ENCODE measurements at regions of chr3 and their contacts with region 1.

Region 1: DNA sequence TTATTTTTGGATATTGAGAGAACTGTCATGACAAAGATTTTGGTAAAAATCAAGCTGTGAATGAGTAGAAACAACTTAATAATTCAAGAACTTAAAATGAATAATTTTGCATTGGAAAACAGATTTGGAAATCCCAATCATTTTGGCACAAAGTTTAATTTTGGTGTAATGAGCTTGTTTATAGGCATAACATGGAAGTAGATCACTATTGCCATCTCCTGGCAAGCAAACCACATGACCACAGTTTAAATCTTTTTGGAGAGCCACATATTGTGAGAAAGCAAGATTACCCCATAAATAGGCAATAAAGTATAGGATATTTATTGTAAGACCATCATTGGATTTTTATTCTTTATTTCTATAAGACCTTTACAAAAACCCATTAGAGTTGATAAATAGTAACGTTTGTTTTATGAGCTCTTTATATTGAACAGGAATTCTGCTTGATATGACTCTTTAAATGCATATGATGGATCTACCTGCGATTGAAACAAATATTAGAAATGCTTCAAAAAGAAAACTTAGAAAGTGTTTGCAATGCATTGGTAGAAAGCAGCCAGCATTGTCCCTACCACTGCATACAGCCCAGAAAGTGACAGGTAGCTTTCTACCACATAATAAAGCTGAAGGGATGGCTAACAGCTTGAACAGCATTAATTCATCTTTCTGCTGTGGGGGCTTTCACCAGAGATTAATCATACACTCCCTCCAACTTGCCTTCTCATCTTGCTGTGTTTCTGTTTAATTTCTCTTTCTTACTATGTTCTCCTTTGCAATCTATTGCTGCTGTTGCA is 766.8 kb downstream of the TBL1XR1 start:
- DNase-seq: no peak
- H3K4me3 ChIP-seq: no peak overlapping the region
- H3K27ac ChIP-seq: no peak overlapping the region
- H3K4me1 ChIP-seq: peaks cover 0 to 5% (median 3%) of the 10 kb centered on the region in 4 experiments; a peak in 2 of 7 replicates
- H3K27me3 ChIP-seq: no peaks in the 10 kb centered on the region
- CTCF ChIP-seq: peak in 2 of 3 experiments; percentile 55 to 67; a peak in 2 of 4 replicates
- EP300 ChIP-seq: no peak
- POLR2A ChIP-seq: no peak
- RAD21 ChIP-seq: peak; percentile 92 to 94

Region 2: DNA sequence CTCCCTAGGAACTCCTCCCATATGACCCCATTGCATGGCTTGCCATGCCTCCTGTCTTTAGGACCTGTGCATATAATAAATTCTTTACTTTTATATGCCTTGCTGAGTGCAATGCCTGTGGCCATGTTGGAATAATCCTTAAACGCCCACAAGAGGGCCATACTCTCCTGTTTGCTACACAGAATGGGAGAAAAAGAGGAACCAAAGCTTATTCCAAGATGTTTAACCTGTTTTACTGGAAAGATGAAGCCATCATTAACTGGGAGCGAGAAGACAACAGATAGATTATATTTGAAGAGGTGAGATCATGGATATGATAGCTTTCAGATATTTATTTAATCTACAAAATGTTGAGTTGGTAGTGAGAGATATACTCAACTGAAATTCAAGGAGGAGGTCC is 473.4 kb before region 1 on chr3:
- CTCF ChIA-PET with region 1: interaction called, 10 read pairs
- POLR2A ChIA-PET with region 1: no interaction called
- DNase-seq: peak in 1 of 2 experiments; percentile 51
- H3K4me3 ChIP-seq: no peak overlapping the region
- H3K27ac ChIP-seq: no peak overlapping the region
- H3K4me1 ChIP-seq: no peaks in the 10 kb centered on the region
- H3K27me3 ChIP-seq: no peaks in the 10 kb centered on the region
- CTCF ChIP-seq: peak in 2 of 3 experiments; percentile 53 to 56; a peak in 3 of 4 replicates
- EP300 ChIP-seq: no peak
- POLR2A ChIP-seq: no peak
- RAD21 ChIP-seq: peak; percentile 85 to 89

Region 3: DNA sequence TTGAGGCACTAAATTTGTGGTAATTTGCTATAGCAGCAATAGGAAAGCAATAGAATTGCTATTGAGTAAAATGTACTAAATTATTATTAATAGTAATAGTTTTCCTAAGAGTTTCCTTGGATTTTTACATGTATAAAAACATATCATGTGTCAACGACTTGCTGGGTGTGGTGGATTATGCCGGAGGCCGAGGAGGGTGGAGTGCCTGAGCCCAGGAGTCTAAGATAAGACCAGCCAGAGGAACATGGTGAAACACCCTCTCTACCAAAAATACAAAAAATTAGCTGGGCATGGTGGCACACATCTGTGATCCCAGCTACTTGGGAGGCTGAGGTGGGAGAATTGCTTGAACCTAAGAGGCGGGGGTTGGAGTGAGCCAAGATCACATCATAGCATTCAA is 16.9 kb after region 1 on chr3:
- CTCF ChIA-PET with region 1: no interaction called
- POLR2A ChIA-PET with region 1: no interaction called
- DNase-seq: no peak
- H3K4me3 ChIP-seq: no peak overlapping the region
- H3K27ac ChIP-seq: no peak overlapping the region
- H3K4me1 ChIP-seq: no peaks in the 10 kb centered on the region
- H3K27me3 ChIP-seq: no peaks in the 10 kb centered on the region
- CTCF ChIP-seq: no peak
- EP300 ChIP-seq: no peak
- POLR2A ChIP-seq: no peak
- RAD21 ChIP-seq: no peak

Measured in H1 (cell line).